ENCODE measurements at regions of chr3 and their contacts with region 1.

Region 1: GRCh38 chr3:124078953-124079911 is 87.3 kb upstream of the ROPN1 start:
- DNase-seq: no peak
- ATAC-seq: no peak
- H3K4me3 ChIP-seq: no peak overlapping the region
- H3K27ac ChIP-seq: peak overlapping the region in 2 of 4 donors; percentile 13 to 42
- H3K4me1 ChIP-seq: peaks cover 10 to 30% of the 10 kb centered on the region in 2 donors
- H3K27me3 ChIP-seq: no peaks in the 10 kb centered on the region
- CTCF ChIP-seq: peak; percentile 53 to 79 (median 61)
- POLR2A ChIP-seq: no peak

Region 2: GRCh38 chr3:123524981-123525380 is 554.3 kb before region 1 on chr3:
- in situ Hi-C with region 1: no loop called
- intact Hi-C with region 1: no loop called
- DNase-seq: no peak
- ATAC-seq: no peak
- H3K4me3 ChIP-seq: no peak overlapping the region
- H3K27ac ChIP-seq: no peak overlapping the region
- H3K4me1 ChIP-seq: peaks cover 4 to 14% of the 10 kb centered on the region in 2 donors
- H3K27me3 ChIP-seq: no peaks in the 10 kb centered on the region
- CTCF ChIP-seq: no peak
- POLR2A ChIP-seq: no peak

Region 3: DNA sequence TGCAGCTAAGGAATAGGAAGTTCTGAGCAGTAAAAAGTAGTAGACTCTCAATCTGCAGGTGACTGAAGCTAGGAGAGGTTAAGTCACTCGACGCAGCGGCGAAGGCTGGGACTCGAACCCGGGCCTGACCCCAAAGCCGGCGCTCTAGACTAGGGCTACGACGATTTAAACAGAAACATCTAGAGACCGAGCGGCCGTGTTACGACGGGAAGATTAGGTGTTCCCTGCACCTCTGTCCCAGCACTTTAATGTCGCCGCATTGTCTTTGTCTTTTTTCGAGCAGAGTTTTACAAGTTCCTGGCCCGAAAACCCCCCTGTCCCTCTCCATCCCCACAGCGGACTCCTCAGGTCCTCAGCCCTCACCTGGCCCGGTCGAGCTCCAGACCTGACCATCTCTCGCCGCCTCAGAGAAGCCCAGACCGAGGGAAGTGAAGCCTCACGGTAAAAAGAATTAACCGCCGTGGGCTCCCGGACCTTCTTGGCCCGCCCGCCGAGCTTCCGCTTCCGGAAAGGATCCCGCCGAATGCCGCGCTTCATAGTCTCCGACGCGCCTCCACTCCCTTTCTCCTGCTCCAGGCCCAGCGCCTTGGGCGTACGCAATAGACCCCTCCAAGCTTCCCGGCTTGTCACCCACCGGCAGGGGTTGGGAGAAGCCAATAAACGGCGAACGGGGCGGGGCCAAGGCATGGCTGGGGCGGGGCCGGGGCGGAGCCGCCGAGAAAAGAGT is 118.3 kb before region 1 on chr3 and contains the start of gene CCDC14:
- in situ Hi-C with region 1: no loop called
- intact Hi-C with region 1: no loop called
- DNase-seq: peak; percentile 81 to 90
- ATAC-seq: peak; percentile 97 to 98
- H3K4me3 ChIP-seq: peak within 1 kb of the TSS; percentile 68 to 89 (median 78)
- H3K27ac ChIP-seq: peak within 1 kb of the TSS; percentile 76 to 80 (median 76)
- H3K4me1 ChIP-seq: peaks cover 8 to 10% of the 10 kb centered on the region in 2 donors
- H3K27me3 ChIP-seq: no peaks in the 10 kb centered on the region
- CTCF ChIP-seq: no peak
- POLR2A ChIP-seq: peak; percentile 58 to 62
- total RNA-seq, gene CCDC14: 3.9 to 16.7 (median 6.4) TPM

Region 4: DNA sequence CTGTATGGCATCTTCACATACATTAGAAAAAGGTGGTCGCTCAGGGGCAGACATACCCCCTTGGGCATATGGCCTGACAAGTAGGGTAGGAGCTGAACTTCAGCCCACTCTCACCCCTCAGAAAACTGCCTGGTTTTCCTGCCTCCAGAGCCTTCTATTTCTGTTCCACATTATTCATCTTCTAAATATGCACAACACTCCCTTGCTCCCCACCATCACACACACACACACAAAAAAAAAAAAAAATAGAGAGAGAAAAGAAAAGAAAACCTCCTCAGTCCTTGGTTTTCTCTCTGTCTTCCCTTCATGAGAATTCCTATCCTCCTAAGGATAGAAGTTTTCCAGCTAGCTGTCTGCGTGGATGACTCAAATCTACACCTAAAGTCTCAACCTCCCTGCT is 81.7 kb before region 1 on chr3:
- in situ Hi-C with region 1: no loop called
- intact Hi-C with region 1: no loop called
- DNase-seq: no peak
- ATAC-seq: no peak
- H3K4me3 ChIP-seq: no peak overlapping the region
- H3K27ac ChIP-seq: no peak overlapping the region
- H3K4me1 ChIP-seq: no peaks in the 10 kb centered on the region
- H3K27me3 ChIP-seq: no peaks in the 10 kb centered on the region
- CTCF ChIP-seq: no peak
- POLR2A ChIP-seq: no peak

Region 5: GRCh38 chr3:124014366-124014942 is 64.8 kb before region 1 on chr3:
- in situ Hi-C with region 1: loop called in 1 of 4 experiments (anchors 5 kb)
- intact Hi-C with region 1: loop called (anchors 1 kb)
- DNase-seq: no peak
- ATAC-seq: no peak
- H3K4me3 ChIP-seq: no peak overlapping the region
- H3K27ac ChIP-seq: no peak overlapping the region
- H3K4me1 ChIP-seq: no peaks in the 10 kb centered on the region
- H3K27me3 ChIP-seq: no peaks in the 10 kb centered on the region
- CTCF ChIP-seq: no peak
- POLR2A ChIP-seq: no peak

Region 6: DNA sequence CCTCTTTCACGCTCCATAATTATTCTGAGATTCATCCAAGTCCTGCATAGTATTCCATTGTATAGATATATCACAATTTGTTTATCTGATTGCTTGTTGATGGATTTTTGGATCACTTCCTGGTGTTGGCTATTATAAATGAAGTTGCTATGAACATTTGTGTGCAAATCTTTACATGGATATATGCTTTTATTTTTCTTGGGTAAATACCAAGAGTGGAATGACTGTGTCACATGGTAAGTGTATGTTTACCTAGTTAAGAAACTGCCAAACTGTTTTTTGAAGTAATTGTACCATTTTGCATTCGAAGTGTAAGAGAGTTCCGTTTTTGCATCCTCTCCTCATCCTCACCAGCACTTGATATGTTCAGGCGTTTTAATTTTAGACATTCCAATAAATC is 52.7 kb before region 1 on chr3:
- in situ Hi-C with region 1: loop called in 2 of 4 experiments (anchors 5 to 10 kb)
- intact Hi-C with region 1: no loop called
- DNase-seq: no peak
- ATAC-seq: no peak
- H3K4me3 ChIP-seq: no peak overlapping the region
- H3K27ac ChIP-seq: no peak overlapping the region
- H3K4me1 ChIP-seq: no peaks in the 10 kb centered on the region
- H3K27me3 ChIP-seq: no peaks in the 10 kb centered on the region
- CTCF ChIP-seq: no peak
- POLR2A ChIP-seq: no peak

Region 7: DNA sequence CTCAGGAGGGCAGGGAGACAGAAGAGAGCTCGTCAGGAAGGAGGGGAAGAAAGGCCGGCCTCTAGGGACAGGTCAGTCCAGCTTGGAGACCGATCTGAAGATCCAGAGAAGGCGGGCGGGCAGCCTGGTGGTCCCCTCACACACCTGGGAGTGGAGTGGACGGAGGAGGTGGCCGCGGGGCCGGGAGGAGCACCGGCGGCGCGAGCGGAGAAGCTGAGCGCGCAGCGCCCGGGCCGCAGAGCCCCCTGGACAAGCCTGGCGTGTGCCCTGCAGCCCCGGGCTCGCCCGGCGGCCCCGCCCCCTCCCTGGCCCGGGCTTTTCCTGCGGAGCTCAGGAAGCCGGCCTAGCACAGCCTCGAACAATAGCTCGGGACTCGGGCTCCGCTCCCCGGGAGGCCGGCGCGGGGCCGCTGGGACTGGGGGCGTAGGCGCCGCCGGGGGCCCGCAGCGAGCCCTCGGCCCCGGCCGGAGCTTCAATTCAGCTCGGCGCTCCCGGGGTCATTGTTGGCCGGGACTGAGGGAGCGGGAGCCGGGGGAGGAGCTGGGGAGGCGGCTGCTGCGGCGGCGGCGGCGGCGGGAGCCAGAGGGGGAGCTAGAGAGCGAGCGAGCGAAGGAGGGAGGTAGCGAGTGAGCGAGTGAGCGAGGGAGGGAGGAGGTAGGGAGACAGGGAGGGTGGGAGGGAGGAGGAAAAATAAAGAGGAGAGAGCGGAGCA is 46.4 kb before region 1 on chr3:
- in situ Hi-C with region 1: loop called in 1 of 4 experiments (anchors 10 kb)
- intact Hi-C with region 1: loop called (anchors 2 kb)
- DNase-seq: peak; percentile 69 to 73
- ATAC-seq: peak; percentile 94 to 95
- H3K4me3 ChIP-seq: peak overlapping the region; percentile 80 to 89 (median 84)
- H3K27ac ChIP-seq: peak overlapping the region; percentile 85 to 95 (median 90)
- H3K4me1 ChIP-seq: peaks cover 6 to 12% of the 10 kb centered on the region in 2 donors
- H3K27me3 ChIP-seq: no peaks in the 10 kb centered on the region
- CTCF ChIP-seq: peak in 4 of 5 experiments; percentile 50 to 88 (median 74)
- POLR2A ChIP-seq: peak; percentile 8 to 30

Measured in gastrocnemius medialis (tissue), 4 donors.